Vagina (tissue), 2 donors: ENCODE measurements at regions of chr4 and their contacts with region 1.

Region 1: DNA sequence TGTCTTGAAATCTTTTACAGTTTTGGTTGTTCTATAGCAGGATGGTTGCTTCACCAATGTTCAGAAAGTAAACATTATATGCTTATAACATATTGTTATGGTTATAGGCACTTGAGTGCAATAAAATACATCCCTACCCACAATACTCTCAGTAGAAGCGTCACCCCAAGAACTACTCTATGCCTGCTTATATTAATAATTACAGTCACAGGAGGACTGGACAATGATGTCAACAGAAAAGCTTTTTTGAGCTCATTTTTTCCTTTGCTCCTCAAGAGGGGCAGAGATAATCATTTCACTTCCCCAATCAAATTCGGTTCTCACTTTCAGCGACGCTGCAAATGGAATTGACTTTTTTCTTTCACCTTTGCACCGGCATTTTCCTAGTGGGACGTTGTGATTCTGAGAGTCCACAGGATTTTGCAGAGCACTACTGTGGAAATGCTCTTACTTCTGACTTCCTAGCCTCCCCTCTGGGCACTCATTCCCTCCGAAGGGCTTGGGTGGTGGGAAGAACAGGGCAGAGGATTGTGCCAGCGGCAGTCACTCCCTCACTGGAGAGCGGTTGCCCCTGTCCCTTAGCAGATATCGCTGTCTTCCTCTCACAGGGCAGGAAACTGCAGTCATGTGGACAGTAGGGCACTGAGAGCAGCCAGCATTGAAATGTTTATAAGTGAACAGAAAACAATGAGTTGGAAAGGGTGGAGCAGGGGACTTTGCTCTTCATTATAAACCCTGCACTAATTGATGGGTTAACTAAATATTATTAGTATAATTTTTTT is 24.9 kb upstream of the SGMS2 start:
- DNase-seq: no peak
- H3K4me3 ChIP-seq: no peak overlapping the region
- H3K27ac ChIP-seq: no peak overlapping the region
- H3K4me1 ChIP-seq: no peaks in the 10 kb centered on the region
- H3K27me3 ChIP-seq: no peaks in the 10 kb centered on the region
- CTCF ChIP-seq: no peak
- POLR2A ChIP-seq: no peak

Region 2: DNA sequence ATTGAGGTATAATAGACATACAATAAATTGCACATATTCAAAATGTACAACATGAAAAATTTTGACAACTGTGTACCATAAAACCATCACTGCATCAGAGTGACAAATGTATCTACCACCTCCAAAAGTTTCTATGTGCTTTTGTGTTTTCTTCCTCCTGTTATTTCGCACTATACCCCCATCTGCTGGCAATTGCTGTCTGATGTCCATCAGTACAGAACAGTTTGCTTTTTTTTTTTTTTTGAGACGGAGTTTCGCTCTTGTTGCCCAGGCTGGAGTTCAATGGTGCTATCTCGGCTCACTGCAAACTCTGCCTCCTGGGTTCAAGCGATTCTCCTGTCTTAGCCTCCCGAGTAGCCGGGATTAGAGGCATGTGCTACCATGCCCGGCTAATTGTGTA is 1277.0 kb before region 1 on chr4:
- intact Hi-C with region 1: loop called (anchors 10 kb)
- DNase-seq: no peak
- H3K4me3 ChIP-seq: no peak overlapping the region
- H3K27ac ChIP-seq: no peak overlapping the region
- H3K4me1 ChIP-seq: no peaks in the 10 kb centered on the region
- H3K27me3 ChIP-seq: no peaks in the 10 kb centered on the region
- CTCF ChIP-seq: no peak
- POLR2A ChIP-seq: no peak